ENCODE measurements at regions of chr5 and their contacts with region 1.

Region 1: DNA sequence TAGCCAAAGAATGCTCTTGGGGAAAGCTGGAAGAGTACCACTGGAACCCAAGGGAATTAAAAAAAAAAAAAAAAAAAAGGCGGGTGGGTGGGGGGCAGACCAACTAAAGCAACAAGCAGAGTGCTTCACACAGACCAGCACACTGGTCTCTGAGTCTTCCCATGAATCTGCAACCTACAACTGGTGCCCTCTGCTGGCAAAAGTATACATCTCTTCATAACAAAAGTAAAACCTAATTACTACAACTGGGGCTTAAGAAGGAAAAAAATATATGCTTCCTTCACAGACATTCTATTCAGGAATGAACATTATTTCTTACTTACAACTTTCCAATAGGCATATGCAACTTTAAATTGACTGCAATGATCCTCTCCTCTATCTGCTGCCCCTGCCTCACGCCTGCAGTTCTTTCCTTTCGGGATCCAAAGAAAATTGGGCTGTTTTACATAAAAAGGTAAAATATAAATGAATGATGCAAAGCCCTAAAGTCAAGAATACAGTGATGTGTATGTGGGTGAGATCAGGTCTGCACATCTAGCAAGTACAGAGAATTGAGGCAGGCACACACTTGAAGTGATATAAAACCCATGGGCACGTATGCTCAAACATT is 7.2 kb upstream of the KLHL3 start:
- DNase-seq: peak; percentile 73
- H3K4me3 ChIP-seq: no peak overlapping the region
- H3K27ac ChIP-seq: no peak overlapping the region
- H3K4me1 ChIP-seq: no peaks in the 10 kb centered on the region
- CTCF ChIP-seq: peak; percentile 80

Region 2: DNA sequence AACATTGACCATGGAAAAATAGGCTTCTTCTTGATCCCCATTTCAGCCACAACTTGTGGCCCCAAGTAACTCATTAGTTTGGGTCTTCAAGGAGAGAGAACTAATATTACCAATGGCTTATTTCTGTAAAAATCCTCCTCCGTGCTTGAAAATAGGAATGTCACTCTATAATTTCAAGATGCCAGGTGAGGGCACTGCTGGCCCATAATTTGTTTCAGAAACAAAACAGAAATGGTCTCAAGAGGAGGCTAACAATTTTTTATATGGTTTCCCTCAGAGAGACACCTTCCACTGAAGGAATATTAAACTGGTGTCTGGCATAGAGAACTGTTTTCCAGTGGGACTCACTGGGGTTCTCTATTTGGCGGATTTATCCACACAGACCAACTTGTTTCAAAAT is 940.8 kb before region 1 on chr5:
- CTCF ChIA-PET with region 1: no interaction called
- POLR2A ChIA-PET with region 1: no interaction called
- intact Hi-C with region 1: loop called (anchors 10 kb)
- DNase-seq: peak; percentile 34
- H3K4me3 ChIP-seq: no peak overlapping the region
- H3K27ac ChIP-seq: no peak overlapping the region
- H3K4me1 ChIP-seq: no peaks in the 10 kb centered on the region
- CTCF ChIP-seq: peak; percentile 71

Region 3: DNA sequence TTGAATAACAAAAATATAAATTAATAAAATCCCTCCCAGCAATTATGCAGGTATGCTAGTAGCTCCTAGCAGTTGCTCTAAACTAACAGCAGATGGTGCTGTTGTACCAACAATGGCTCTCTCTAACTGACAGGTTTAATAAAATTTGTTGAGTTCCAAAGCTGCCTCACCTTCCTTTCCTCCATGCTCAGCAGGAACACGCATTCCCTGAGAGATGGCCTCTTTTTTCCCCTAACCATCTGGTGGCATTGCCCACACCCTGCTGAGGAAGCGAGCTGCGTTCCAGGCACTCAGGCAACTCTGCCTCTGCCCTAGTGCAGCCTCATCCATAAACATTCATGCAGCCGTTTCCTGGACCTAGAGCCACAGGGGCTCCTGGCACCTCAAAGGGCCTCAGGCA is 113.5 kb before region 1 on chr5:
- CTCF ChIA-PET with region 1: interaction called, 12 read pairs
- POLR2A ChIA-PET with region 1: interaction called, 3 read pairs
- intact Hi-C with region 1: loop called (anchors 1 kb)
- DNase-seq: peak; percentile 68
- H3K4me3 ChIP-seq: no peak overlapping the region
- H3K27ac ChIP-seq: no peak overlapping the region
- H3K4me1 ChIP-seq: no peaks in the 10 kb centered on the region
- CTCF ChIP-seq: peak; percentile 91

Region 4: DNA sequence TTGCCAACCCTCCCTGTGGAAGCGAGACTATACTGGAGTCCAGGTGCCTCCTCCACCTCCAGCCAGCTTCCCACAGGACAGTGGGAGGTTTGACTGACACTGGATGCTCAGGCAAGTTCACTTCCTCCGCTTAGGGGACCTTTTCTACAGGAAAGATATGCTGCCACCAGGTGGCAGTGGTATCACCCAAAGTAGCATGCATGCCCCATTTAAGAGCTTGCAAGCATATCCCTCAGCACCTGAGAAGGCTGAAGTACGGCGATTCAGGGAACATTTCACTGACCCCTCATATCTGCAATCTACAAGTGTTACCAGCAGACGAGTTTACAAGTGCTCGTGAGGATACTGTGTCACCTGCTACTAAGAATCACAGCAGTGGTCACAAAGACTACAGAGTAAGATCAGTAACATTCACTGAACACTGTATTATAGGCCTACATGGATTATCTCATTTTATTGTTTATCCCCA is 82.8 kb before region 1 on chr5:
- CTCF ChIA-PET with region 1: interaction called, 3 read pairs
- POLR2A ChIA-PET with region 1: interaction called, 3 read pairs
- intact Hi-C with region 1: loop called (anchors 1 kb)
- DNase-seq: peak; percentile 72
- H3K4me3 ChIP-seq: no peak overlapping the region
- H3K27ac ChIP-seq: no peak overlapping the region
- H3K4me1 ChIP-seq: no peaks in the 10 kb centered on the region
- CTCF ChIP-seq: peak; percentile 89

Region 5: GRCh38 chr5:137724251-137724650 is 18.9 kb before region 1 on chr5:
- CTCF ChIA-PET with region 1: no interaction called
- POLR2A ChIA-PET with region 1: no interaction called
- intact Hi-C with region 1: no loop called
- DNase-seq: no peak
- H3K4me3 ChIP-seq: no peak overlapping the region
- H3K27ac ChIP-seq: no peak overlapping the region
- H3K4me1 ChIP-seq: no peaks in the 10 kb centered on the region
- CTCF ChIP-seq: no peak

Region 6: GRCh38 chr5:137822158-137822764 is 79.1 kb after region 1 on chr5:
- CTCF ChIA-PET with region 1: no interaction called
- POLR2A ChIA-PET with region 1: no interaction called
- intact Hi-C with region 1: no loop called
- DNase-seq: peak; percentile 18
- H3K4me3 ChIP-seq: no peak overlapping the region
- H3K27ac ChIP-seq: no peak overlapping the region
- H3K4me1 ChIP-seq: no peaks in the 10 kb centered on the region
- CTCF ChIP-seq: peak; percentile 65

Region 7: DNA sequence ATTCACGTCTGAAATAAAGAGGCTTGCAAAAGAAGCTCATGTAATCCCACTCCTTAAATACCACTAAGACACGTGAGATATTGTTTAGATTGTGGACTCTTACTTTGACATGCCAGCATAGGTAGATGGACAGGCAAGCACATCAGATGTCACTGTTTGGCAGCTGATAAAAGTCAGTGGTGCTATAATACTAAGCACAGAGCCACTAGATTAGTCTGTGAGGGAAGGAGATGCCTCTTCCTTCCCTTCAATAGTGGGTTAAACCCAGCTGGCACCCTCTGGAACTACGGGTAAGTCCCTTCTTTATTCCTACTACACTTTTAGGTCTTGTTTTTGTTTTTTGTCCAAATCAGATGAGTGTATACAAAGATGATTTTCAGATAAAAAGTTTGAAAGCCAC is 124.5 kb after region 1 on chr5 and contains the start of gene MYOT:
- CTCF ChIA-PET with region 1: no interaction called
- POLR2A ChIA-PET with region 1: no interaction called
- intact Hi-C with region 1: no loop called
- DNase-seq: no peak
- H3K4me3 ChIP-seq: no peak within 1 kb of the TSS
- H3K27ac ChIP-seq: no peak within 1 kb of the TSS
- H3K4me1 ChIP-seq: no peaks in the 10 kb centered on the region
- CTCF ChIP-seq: no peak
- total RNA-seq, gene MYOT: 0.28 TPM in 1 of 2 replicates, not detected in the other